Sigmoid colon (tissue), 7 donors: ENCODE measurements at regions of chr2 and their contacts with region 1.

Region 1: DNA sequence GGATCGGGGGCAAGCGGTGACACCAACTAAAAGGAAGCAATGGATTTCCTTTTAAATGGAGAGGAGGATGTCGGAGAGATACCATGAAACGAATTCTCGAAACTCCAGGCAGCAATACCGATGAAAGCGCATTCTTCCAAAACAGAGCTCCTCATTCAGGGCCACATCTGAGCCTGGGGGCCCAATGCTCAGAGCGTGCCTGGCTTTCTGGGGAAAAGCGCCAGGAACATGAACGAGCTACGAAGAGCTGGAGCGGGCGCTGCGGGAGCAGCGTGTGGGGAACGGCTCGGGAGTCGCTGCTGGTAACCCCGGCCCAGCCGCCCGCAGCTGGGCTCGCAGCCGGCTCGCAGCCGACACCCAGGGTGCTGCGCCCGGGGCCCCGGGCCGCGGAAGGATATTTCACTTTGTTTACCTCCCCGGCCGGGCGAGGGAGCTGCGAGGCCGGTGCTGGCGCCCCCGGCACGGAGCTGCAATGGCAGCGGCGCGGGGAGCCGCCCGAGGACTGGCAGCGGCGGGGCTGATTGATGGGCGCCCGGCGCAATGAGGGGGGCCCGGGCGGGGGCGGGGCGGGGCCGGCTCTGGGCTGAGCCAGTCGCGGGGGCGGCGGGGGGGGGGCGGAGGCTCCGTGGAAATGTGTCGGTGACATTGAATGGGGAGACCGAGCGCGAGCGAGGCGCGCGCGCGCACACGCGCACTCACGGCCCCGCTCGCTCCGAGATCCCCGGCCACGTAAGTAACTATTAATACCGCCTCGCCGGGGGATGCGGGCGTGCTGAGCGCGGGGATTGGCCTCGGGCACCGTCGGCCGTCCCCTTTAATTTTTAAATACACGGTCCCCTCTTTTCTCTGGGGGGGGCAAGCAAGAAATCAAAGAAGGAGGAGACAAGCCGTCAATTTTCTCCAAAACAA is at the start of gene TRIB2:
- DNase-seq: peak; percentile 92
- H3K4me3 ChIP-seq: peak within 1 kb of the TSS; percentile 68 to 92 (median 78)
- H3K27ac ChIP-seq: peak within 1 kb of the TSS; percentile 91 to 95 (median 93)
- H3K4me1 ChIP-seq: peaks cover 0 to 50% (median 37%) of the 10 kb centered on the region in 4 donors
- H3K27me3 ChIP-seq: no peaks in the 10 kb centered on the region
- CTCF ChIP-seq: no peak
- EP300 ChIP-seq: peak in 1 of 4 donors; percentile 50
- POLR2A ChIP-seq: peak; percentile 38 to 51
- total RNA-seq, gene TRIB2: 34.2 to 56.2 (median 46.6) TPM

Region 2: DNA sequence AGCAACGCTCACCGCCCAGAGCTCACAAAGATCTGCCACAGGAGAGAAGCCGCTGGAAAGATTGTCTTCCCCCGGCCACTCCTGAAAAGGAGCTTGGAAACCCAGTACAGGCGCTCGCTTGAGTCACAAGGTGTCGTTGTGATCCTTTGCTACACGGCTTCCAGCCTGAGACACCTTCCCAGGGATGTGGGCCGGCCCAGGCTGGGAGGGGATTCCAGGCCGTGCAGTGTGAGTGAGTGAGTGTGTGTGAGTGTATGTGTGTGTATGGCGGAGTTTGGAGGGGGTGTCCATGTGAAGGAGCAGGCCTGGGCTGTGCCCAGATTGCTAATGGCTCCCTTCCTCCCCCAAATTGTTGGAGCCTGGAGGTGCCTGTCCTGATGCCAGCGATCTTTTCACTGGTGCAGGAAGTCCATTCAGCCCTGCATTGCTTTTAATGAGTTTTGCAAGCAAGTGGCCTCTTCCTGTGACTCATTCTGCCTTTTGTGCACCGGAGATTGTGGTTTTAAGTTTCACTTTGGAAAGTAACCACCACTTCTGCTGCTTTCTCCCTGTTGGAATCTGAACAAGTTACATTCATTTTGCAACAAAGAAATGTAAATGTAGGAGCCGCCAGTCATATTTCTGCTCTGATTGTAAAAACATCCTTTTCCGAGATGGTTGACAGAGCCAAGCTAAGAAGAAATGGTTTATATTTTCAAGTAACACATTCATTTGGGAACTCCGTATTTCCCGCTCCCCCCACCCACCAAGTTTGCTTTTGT is 886.4 kb before region 1 on chr2:
- intact Hi-C with region 1: loop called (anchors 5 kb)
- DNase-seq: peak; percentile 84
- H3K4me3 ChIP-seq: peak overlapping the region; percentile 3 to 37 (median 27)
- H3K27ac ChIP-seq: peak overlapping the region; percentile 75 to 84 (median 80)
- H3K4me1 ChIP-seq: peaks cover 0 to 24% (median 22%) of the 10 kb centered on the region in 4 donors
- H3K27me3 ChIP-seq: no peaks in the 10 kb centered on the region
- CTCF ChIP-seq: peak in 2 of 4 experiments; percentile 5 to 27
- EP300 ChIP-seq: no peak
- POLR2A ChIP-seq: no peak

Region 3: GRCh38 chr2:12176623-12177454 is 539.7 kb before region 1 on chr2:
- intact Hi-C with region 1: loop called (anchors 5 kb)
- DNase-seq: peak; percentile 79
- H3K4me3 ChIP-seq: no peak overlapping the region
- H3K27ac ChIP-seq: peak overlapping the region in 2 of 4 donors; percentile 42 to 52
- H3K4me1 ChIP-seq: peaks cover 0 to 25% (median 18%) of the 10 kb centered on the region in 4 donors
- H3K27me3 ChIP-seq: no peaks in the 10 kb centered on the region
- CTCF ChIP-seq: no peak
- EP300 ChIP-seq: no peak
- POLR2A ChIP-seq: no peak

Region 4: GRCh38 chr2:12317814-12318426 is 398.6 kb before region 1 on chr2:
- intact Hi-C with region 1: loop called (anchors 10 kb)
- DNase-seq: no peak
- H3K4me3 ChIP-seq: no peak overlapping the region
- H3K27ac ChIP-seq: peak overlapping the region; percentile 35 to 78 (median 70)
- H3K4me1 ChIP-seq: peaks cover 0 to 57% (median 51%) of the 10 kb centered on the region in 4 donors
- H3K27me3 ChIP-seq: no peaks in the 10 kb centered on the region
- CTCF ChIP-seq: no peak
- EP300 ChIP-seq: peak in 1 of 4 donors; percentile 11
- POLR2A ChIP-seq: no peak

Region 5: GRCh38 chr2:12463189-12463588 is 253.3 kb before region 1 on chr2:
- intact Hi-C with region 1: loop called (anchors 5 kb)
- DNase-seq: no peak
- H3K4me3 ChIP-seq: no peak overlapping the region
- H3K27ac ChIP-seq: no peak overlapping the region
- H3K4me1 ChIP-seq: peaks cover 0 to 7% (median 0%) of the 10 kb centered on the region in 4 donors
- H3K27me3 ChIP-seq: no peaks in the 10 kb centered on the region
- CTCF ChIP-seq: no peak
- EP300 ChIP-seq: no peak
- POLR2A ChIP-seq: no peak

Region 6: GRCh38 chr2:12918835-12919445 is 202.4 kb after region 1 on chr2:
- intact Hi-C with region 1: loop called (anchors 5 kb)
- DNase-seq: peak; percentile 95
- H3K4me3 ChIP-seq: no peak overlapping the region
- H3K27ac ChIP-seq: peak overlapping the region; percentile 59 to 77 (median 75)
- H3K4me1 ChIP-seq: peaks cover 0 to 33% (median 30%) of the 10 kb centered on the region in 4 donors
- H3K27me3 ChIP-seq: no peaks in the 10 kb centered on the region
- CTCF ChIP-seq: no peak
- EP300 ChIP-seq: peak; percentile 34 to 87 (median 62)
- POLR2A ChIP-seq: no peak

Region 7: DNA sequence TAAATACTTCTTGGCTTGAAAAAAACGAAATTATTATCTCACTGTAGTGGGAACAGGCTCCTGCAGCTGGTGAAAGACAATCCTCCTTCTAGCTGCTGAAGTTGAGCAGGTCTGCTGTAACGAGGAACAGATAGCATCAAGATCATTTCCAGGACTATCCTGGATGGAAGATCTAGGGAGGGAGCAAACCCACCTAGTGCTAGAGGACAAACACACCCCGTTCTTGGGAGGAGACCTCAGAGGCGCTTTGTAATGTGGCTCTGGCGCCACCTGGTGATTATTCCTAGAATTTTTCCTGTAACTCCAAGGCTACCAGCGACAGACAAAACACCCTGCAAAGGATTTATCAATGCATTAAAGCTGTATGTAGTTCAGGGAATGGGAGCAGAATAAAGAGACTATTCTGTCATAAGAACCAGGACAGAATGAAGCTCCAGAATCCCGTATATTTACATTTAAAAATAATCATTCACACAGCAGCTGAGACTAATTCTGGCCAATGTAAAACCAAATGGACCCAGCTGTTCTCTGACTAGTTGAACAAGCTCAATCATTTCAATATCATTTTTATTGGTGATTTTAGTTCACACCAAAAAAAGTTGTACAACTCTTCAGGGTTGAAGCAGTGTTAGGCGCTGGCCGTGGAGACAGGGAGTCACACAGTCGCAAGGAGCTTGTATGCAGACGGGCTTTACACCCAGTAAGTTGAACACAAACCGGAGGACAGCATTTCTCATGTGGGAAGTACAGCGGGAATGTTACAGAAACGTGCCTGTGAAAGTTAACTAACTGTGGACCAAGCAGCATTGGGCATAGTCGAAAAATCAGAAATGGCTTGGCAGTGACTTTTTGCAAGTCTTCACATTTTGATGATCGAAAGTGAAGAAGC is 290.5 kb after region 1 on chr2:
- intact Hi-C with region 1: loop called (anchors 2 kb)
- DNase-seq: peak; percentile 80
- H3K4me3 ChIP-seq: peak overlapping the region in 1 of 4 donors; percentile 2
- H3K27ac ChIP-seq: peak overlapping the region in 3 of 4 donors; percentile 42 to 53 (median 44)
- H3K4me1 ChIP-seq: peaks cover 0 to 20% (median 18%) of the 10 kb centered on the region in 4 donors
- H3K27me3 ChIP-seq: no peaks in the 10 kb centered on the region
- CTCF ChIP-seq: peak; percentile 57 to 90 (median 81)
- EP300 ChIP-seq: no peak
- POLR2A ChIP-seq: no peak

Region 8: GRCh38 chr2:13284688-13285087 is 568.2 kb after region 1 on chr2:
- intact Hi-C with region 1: no loop called
- DNase-seq: no peak
- H3K4me3 ChIP-seq: no peak overlapping the region
- H3K27ac ChIP-seq: no peak overlapping the region
- H3K4me1 ChIP-seq: no peaks in the 10 kb centered on the region
- H3K27me3 ChIP-seq: no peaks in the 10 kb centered on the region
- CTCF ChIP-seq: no peak
- EP300 ChIP-seq: no peak
- POLR2A ChIP-seq: no peak